Transverse colon (tissue), 4 donors: ENCODE measurements at regions of chr2 and their contacts with region 1.

Region 1: DNA sequence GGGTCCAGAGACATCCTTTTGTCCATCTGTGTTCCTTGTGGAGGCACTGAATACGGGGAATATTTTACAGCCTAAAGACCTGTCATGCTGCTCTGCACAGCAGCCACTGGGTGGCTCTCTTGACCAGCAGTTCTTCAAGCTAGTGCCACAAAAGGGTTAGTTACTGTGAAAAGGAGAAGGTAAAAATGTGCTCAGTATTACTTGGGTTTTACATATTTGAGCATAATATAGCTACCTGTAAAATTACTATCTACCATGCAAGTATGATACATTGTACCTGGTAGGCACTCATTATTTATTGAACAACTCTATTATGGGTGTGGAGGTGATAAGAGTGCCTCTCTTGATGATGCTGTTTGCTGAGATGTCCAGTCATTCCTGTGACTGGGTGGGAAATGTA is 23.6 kb downstream of the FZD5 start:
- DNase-seq: peak; percentile 42
- H3K4me3 ChIP-seq: no peak overlapping the region
- H3K27ac ChIP-seq: no peak overlapping the region
- H3K4me1 ChIP-seq: peaks cover 0 to 15% (median 2%) of the 10 kb centered on the region in 4 donors
- H3K27me3 ChIP-seq: no peaks in the 10 kb centered on the region
- CTCF ChIP-seq: peak; percentile 72 to 90 (median 80)
- EP300 ChIP-seq: no peak
- POLR2A ChIP-seq: no peak

Region 2: DNA sequence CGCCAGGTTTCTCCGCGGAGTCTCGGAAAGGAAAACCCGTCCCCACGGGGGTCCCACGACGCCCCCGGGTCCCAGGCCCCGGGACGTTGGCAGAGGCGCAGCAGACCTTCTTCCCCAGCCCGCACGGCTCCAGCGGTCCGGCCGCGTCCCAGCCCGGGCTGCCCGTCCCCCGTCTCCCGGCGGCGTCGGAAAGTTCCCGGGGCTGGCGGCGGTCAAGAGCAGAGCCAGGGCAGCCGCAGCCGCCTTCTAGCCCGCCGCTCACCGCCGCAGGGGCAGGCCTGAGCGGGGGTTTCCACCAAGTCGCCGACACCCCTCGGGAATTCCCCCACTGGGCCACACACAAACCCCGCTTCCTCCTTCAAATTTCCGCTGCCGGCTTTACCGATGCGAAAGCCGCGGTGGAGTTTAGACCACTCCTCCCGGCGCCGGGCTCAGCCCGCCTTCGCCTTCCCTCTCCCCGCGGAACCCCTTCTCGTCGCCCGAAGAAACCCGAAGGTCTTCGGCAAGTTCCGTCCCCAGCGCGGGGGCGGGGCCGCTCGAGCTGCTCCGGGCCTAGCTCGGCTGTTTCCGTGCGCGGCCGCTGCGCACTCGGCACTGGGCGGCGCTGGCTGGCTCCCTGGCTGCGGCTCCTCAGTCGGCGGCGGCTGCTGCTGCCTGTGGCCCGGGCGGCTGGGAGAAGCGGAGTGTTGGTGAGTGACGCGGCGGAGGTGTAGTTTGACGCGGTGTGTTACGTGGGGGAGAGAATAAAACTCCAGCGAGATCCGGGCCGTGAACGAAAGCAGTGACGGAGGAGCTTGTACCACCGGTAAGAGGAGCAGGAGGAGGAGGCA is 216.6 kb before region 1 on chr2 and contains the start of gene CREB1:
- in situ Hi-C with region 1: loop called in 1 of 4 experiments (anchors 25 kb)
- intact Hi-C with region 1: no loop called
- DNase-seq: peak; percentile 99
- H3K4me3 ChIP-seq: peak within 1 kb of the TSS; percentile 63 to 90 (median 83)
- H3K27ac ChIP-seq: peak within 1 kb of the TSS; percentile 97 to 99 (median 98)
- H3K4me1 ChIP-seq: peaks cover 24 to 50% (median 37%) of the 10 kb centered on the region in 4 donors
- H3K27me3 ChIP-seq: no peaks in the 10 kb centered on the region
- CTCF ChIP-seq: no peak
- EP300 ChIP-seq: peak; percentile 79
- POLR2A ChIP-seq: peak; percentile 99
- total RNA-seq, gene CREB1: 41.9 to 56.1 (median 51.9) TPM

Region 3: GRCh38 chr2:207974216-207974605 is 228.1 kb after region 1 on chr2:
- in situ Hi-C with region 1: loop called in 1 of 4 experiments (anchors 10 kb)
- intact Hi-C with region 1: no loop called
- DNase-seq: no peak
- H3K4me3 ChIP-seq: no peak overlapping the region
- H3K27ac ChIP-seq: no peak overlapping the region
- H3K4me1 ChIP-seq: peaks cover 11 to 27% (median 19%) of the 10 kb centered on the region in 4 donors
- H3K27me3 ChIP-seq: no peaks in the 10 kb centered on the region
- CTCF ChIP-seq: no peak
- EP300 ChIP-seq: no peak
- POLR2A ChIP-seq: no peak

Region 4: GRCh38 chr2:208025037-208025813 is 279.1 kb after region 1 on chr2 and contains the start of gene PLEKHM3:
- in situ Hi-C with region 1: loop called in 3 of 4 experiments (anchors 10 to 25 kb)
- intact Hi-C with region 1: no loop called
- DNase-seq: peak; percentile 90
- H3K4me3 ChIP-seq: peak within 1 kb of the TSS; percentile 45 to 98 (median 72)
- H3K27ac ChIP-seq: peak within 1 kb of the TSS; percentile 71 to 87 (median 76)
- H3K4me1 ChIP-seq: peaks cover 4 to 19% (median 15%) of the 10 kb centered on the region in 4 donors
- H3K27me3 ChIP-seq: no peaks in the 10 kb centered on the region
- CTCF ChIP-seq: no peak
- EP300 ChIP-seq: no peak
- POLR2A ChIP-seq: peak; percentile 80
- total RNA-seq, gene PLEKHM3: 19.1 to 26.5 (median 24.0) TPM

Region 5: GRCh38 chr2:208033758-208034502 is 287.8 kb after region 1 on chr2:
- in situ Hi-C with region 1: loop called in 3 of 4 experiments (anchors 10 to 25 kb)
- intact Hi-C with region 1: no loop called
- DNase-seq: peak; percentile 70
- H3K4me3 ChIP-seq: no peak overlapping the region
- H3K27ac ChIP-seq: no peak overlapping the region
- H3K4me1 ChIP-seq: no peaks in the 10 kb centered on the region
- H3K27me3 ChIP-seq: no peaks in the 10 kb centered on the region
- CTCF ChIP-seq: peak in 4 of 5 experiments; percentile 29 to 64 (median 43)
- EP300 ChIP-seq: no peak
- POLR2A ChIP-seq: no peak

Region 6: GRCh38 chr2:208040199-208041171 is 294.4 kb after region 1 on chr2:
- in situ Hi-C with region 1: loop called in 3 of 4 experiments (anchors 10 to 25 kb)
- intact Hi-C with region 1: loop called (anchors 10 kb)
- DNase-seq: peak; percentile 80
- H3K4me3 ChIP-seq: no peak overlapping the region
- H3K27ac ChIP-seq: peak overlapping the region in 1 of 4 donors; percentile 34
- H3K4me1 ChIP-seq: no peaks in the 10 kb centered on the region
- H3K27me3 ChIP-seq: no peaks in the 10 kb centered on the region
- CTCF ChIP-seq: peak; percentile 69 to 78 (median 71)
- EP300 ChIP-seq: no peak
- POLR2A ChIP-seq: no peak

Region 7: GRCh38 chr2:208062113-208062512 is 316.0 kb after region 1 on chr2:
- in situ Hi-C with region 1: loop called in 1 of 4 experiments (anchors 10 kb)
- intact Hi-C with region 1: no loop called
- DNase-seq: no peak
- H3K4me3 ChIP-seq: no peak overlapping the region
- H3K27ac ChIP-seq: no peak overlapping the region
- H3K4me1 ChIP-seq: no peaks in the 10 kb centered on the region
- H3K27me3 ChIP-seq: no peaks in the 10 kb centered on the region
- CTCF ChIP-seq: peak in 4 of 5 experiments; percentile 25 to 42 (median 33)
- EP300 ChIP-seq: no peak
- POLR2A ChIP-seq: no peak